CD8-positive, alpha-beta memory T cell (primary cell): ENCODE measurements at regions of chr3 and their contacts with region 1.

Region 1: DNA sequence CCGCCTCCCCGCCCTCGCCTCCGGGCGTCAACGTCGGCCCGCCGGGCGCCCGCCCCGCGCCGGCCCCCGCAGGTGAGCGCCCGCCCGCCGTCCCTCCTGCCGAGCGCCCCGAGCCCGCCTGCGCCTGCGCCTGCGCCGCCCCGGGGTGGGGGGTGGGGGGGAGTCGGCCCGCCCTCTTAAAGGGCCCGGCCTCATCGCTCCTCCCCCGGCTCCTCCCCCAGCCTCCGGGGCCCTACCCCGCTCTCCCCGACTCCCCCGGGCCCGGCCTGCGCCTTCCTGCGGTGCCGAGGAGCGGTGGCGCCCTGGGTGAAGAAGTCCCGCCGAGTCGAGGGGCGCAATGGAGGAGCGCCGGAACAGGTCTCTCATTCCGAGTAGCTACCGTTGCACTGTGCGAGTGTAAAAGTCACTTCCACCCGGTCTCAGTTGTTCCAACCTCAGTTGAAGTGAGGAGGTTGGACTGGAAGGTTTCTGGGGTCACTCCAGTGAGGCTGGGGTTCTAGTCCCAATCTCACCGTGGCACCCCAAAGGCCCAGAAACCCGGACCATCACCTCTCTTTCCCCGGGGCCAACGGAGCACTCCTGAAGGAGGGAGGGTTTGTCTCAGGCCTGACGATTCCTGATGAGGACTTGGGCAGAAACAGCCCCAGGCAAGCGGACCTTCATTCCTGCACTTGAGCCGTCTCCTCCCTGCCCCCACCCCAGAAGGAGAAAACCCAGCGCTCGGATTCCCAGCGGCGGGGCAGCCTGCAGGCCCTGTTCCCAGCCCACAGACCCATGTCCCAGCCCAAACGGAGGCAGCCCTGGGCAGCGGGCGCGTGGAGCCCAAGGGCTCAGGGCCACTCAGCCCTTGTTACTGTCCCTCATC is 1.5 kb upstream of the TNK2 start:
- DNase-seq: peak; percentile 84 to 92 (median 86)
- H3K4me3 ChIP-seq: peak overlapping the region; percentile 54
- H3K4me3 Mint-ChIP-seq: peak overlapping the region; percentile 58 to 91 (median 72)
- H3K27ac ChIP-seq: peak overlapping the region; percentile 64
- H3K27ac Mint-ChIP-seq: peak overlapping the region in 6 of 8 donors; percentile 36 to 89 (median 72)
- H3K4me1 ChIP-seq: peaks cover 41% of the 10 kb centered on the region
- H3K4me1 Mint-ChIP-seq: peaks cover 33 to 47% (median 39%) of the 10 kb centered on the region in 3 donors
- H3K27me3 ChIP-seq: no peaks in the 10 kb centered on the region
- H3K27me3 Mint-ChIP-seq: peaks cover 0 to 3% of the 10 kb centered on the region in 2 donors

Region 2: GRCh38 chr3:195863121-195864006 is 46.5 kb before region 1 on chr3:
- CTCF ChIA-PET with region 1: interaction called, 72 read pairs
- POLR2A ChIA-PET with region 1: interaction called, 6 read pairs
- DNase-seq: peak; percentile 34 to 72 (median 44)
- H3K4me3 ChIP-seq: no peak overlapping the region
- H3K4me3 Mint-ChIP-seq: no peak overlapping the region
- H3K27ac ChIP-seq: no peak overlapping the region
- H3K27ac Mint-ChIP-seq: peak overlapping the region in 4 of 8 donors; percentile 38 to 79 (median 50)
- H3K4me1 ChIP-seq: peaks cover 8% of the 10 kb centered on the region
- H3K4me1 Mint-ChIP-seq: peaks cover 4 to 7% (median 4%) of the 10 kb centered on the region in 3 donors
- H3K27me3 ChIP-seq: no peaks in the 10 kb centered on the region
- H3K27me3 Mint-ChIP-seq: no peaks in the 10 kb centered on the region

Region 3: DNA sequence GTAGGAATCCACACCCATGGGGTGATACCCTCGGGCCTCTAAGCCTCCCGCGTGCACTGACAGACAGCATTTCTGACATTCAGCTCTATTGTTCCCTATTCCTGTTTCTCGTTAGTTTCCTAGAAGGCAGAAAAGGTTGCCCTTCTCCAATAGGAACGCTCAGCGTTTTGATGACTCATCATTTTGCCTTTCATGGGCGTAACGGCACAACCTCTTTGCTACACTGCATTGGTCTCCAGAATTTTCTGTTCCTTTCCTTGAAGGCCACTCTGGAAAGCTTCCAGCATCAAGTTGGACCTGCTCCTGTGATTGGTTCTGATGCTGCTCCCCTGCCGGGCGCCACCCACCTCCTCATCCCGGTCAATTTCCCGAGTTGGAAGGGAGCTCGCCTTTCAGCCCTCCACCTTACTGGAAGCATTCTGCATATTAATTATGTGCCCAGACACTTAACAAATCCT is 11.5 kb after region 1 on chr3:
- CTCF ChIA-PET with region 1: interaction called, 10 read pairs
- POLR2A ChIA-PET with region 1: no interaction called
- DNase-seq: no peak
- H3K4me3 ChIP-seq: no peak overlapping the region
- H3K4me3 Mint-ChIP-seq: no peak overlapping the region
- H3K27ac ChIP-seq: no peak overlapping the region
- H3K27ac Mint-ChIP-seq: no peak overlapping the region
- H3K4me1 ChIP-seq: peaks cover 4% of the 10 kb centered on the region
- H3K4me1 Mint-ChIP-seq: peaks cover 0 to 9% (median 0%) of the 10 kb centered on the region in 3 donors
- H3K27me3 ChIP-seq: no peaks in the 10 kb centered on the region
- H3K27me3 Mint-ChIP-seq: peaks cover 5 to 9% of the 10 kb centered on the region in 2 donors

Region 4: GRCh38 chr3:195999896-196000295 is 90.0 kb after region 1 on chr3:
- CTCF ChIA-PET with region 1: no interaction called
- POLR2A ChIA-PET with region 1: no interaction called
- DNase-seq: no peak
- H3K4me3 ChIP-seq: no peak overlapping the region
- H3K4me3 Mint-ChIP-seq: no peak overlapping the region
- H3K27ac ChIP-seq: no peak overlapping the region
- H3K27ac Mint-ChIP-seq: no peak overlapping the region
- H3K4me1 ChIP-seq: no peaks in the 10 kb centered on the region
- H3K4me1 Mint-ChIP-seq: no peaks in the 10 kb centered on the region
- H3K27me3 ChIP-seq: no peaks in the 10 kb centered on the region
- H3K27me3 Mint-ChIP-seq: peaks cover 21 to 24% of the 10 kb centered on the region in 2 donors